Ovary (tissue), 10 donors: ENCODE measurements at regions of chr1 and their contacts with region 1.

Region 1: DNA sequence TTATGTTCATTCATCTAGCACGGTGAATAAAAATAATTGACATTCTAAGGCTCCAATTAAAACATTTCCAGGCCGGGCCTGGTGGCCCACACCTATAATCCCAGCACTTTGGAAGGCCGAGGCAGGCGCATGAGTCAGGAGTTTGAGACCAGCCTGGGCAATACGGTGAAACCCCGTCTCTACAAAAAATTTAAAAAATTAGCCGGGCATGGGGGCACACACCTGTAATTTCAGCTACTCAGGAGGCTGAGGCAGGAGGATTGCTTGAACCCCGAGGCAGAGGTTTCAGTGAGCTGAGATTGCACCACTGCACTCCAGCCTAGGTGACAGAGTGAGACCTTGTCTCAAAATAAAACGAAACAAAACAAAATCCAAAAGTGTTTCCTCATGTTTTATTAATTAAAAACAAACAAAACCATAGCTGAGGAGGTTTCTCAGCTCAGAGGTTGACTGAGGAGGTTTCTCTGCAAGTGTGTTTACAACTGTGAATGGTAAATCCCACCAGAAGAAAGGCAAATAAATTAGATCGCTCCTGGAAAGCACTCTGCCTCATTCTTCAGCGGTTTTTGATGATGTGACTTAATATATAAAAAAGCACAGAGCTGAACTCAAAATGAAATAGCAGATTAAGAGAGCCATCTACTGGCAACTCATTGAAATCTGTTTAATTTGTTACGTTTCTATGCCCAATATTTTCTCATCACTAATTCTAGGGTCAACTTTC is 37.7 kb upstream of the ATG4C start:
- DNase-seq: no peak
- H3K4me3 ChIP-seq: no peak overlapping the region
- H3K27ac ChIP-seq: no peak overlapping the region
- H3K4me1 ChIP-seq: peaks cover 2% of the 10 kb centered on the region
- H3K27me3 ChIP-seq: no peaks in the 10 kb centered on the region
- CTCF ChIP-seq: peak; percentile 17 to 59 (median 25)
- EP300 ChIP-seq: no peak
- POLR2A ChIP-seq: no peak

Region 2: GRCh38 chr1:62175568-62176179 is 570.6 kb before region 1 on chr1:
- intact Hi-C with region 1: loop called in 2 of 4 experiments (anchors 5 to 10 kb)
- DNase-seq: peak in 1 of 5 donors; percentile 22
- H3K4me3 ChIP-seq: no peak overlapping the region
- H3K27ac ChIP-seq: no peak overlapping the region
- H3K4me1 ChIP-seq: no peaks in the 10 kb centered on the region
- H3K27me3 ChIP-seq: no peaks in the 10 kb centered on the region
- CTCF ChIP-seq: peak in 2 of 3 donors; percentile 28 to 31
- EP300 ChIP-seq: no peak
- POLR2A ChIP-seq: no peak

Region 3: GRCh38 chr1:62508187-62508758 is 238.0 kb before region 1 on chr1:
- intact Hi-C with region 1: loop called (anchors 5 to 10 kb)
- DNase-seq: peak in 1 of 5 donors; percentile 22
- H3K4me3 ChIP-seq: no peak overlapping the region
- H3K27ac ChIP-seq: no peak overlapping the region
- H3K4me1 ChIP-seq: no peaks in the 10 kb centered on the region
- H3K27me3 ChIP-seq: no peaks in the 10 kb centered on the region
- CTCF ChIP-seq: peak in 2 of 3 donors; percentile 27 to 37
- EP300 ChIP-seq: no peak
- POLR2A ChIP-seq: no peak